GM12878 (cell line): ENCODE measurements at regions of chr11 and their contacts with region 1.

Region 1: DNA sequence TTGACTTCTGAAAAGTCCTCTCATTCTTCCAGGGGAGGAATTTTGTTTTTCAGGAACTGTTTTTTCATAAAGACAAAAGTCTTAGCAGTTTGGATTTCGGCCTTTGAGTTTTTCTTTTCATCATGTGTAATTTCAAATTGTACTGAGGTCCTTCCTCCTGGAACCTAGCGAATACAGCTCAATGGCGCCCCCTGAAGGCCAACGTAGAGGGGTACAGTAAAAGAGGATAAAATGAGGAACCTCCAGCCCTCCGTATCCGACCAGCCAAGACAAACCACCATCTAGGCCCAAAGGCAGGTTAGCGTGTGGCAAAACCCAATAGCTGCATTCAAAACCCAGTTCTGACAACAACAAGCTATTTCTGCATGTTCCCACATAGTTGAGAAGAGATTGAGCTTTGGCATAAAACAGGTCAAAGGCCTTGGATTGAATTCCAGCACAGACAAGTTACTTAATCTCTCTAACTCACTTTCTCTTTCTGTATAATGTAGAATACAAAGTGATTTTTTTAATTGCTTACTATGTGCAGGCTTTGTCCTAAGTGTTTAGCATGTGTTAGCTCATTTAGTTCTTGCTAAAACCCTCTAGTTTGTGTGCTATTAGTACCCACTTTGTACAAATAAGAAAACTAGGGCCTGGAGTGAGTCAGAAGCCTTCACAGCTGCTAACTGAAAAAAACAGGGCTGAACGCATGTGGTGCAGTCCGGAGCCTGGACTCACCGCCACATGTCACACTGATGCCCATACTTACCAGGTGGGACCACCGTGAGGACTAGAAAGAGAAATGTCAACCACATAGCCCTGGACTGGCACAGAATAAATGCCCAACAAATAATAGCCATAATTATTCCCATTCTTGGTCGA is 43.2 kb upstream of the ETS1 start:
- DNase-seq: peak; percentile 89
- ATAC-seq: peak; percentile 87
- H3K4me3 ChIP-seq: peak overlapping the region; percentile 15; the same call in 1 of the 2 replicates
- H3K27ac ChIP-seq: peak overlapping the region; percentile 64
- H3K4me1 ChIP-seq: peaks cover 51% of the 10 kb centered on the region
- H3K27me3 ChIP-seq: no peaks in the 10 kb centered on the region
- CTCF ChIP-seq: peak; percentile 80 to 97 (median 82)
- EP300 ChIP-seq: no peak
- POLR2A ChIP-seq: no peak
- RAD21 ChIP-seq: peak; percentile 98

Region 2: DNA sequence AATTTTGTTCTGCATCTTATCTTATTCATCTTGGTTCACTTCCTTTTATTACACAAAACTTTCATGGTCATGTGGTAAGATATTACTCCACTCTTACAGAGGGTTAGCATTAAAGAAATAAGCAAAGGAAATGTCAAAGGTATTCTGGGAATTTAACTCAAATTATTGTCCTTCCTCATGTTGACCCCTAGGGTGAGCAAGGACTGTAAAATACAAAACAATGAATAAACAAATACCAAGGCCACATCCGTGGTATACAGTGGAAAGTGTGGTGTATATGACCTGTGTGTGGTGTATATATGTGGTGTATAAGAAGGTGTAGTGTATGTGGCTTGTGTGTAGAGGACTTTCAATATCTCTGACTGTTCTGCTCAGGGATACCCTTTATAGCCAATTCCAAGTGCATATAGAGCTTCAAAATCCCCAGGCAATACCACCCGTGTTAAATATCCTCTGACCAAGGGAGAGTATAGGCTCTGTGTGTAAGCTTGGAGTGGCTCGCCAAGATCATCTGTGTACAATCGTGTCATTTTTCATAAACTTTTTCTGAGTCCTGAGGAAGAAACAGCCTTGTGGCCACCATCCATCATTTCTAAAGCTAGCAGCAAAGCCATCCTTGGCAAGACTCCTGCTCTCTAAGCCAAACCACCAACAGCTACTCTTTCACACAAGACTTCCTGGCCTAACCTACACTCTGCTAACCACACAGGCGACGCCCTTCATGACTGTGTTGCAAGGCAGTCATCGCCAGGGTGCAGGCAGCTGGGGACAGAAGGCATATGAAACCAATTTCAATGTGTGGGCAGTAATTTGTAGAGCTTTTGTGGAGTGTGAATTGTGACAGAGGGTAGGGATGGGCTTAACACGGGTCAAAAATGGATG is 591.2 kb before region 1 on chr11:
- CTCF ChIA-PET with region 1: no interaction called
- POLR2A ChIA-PET with region 1: no interaction called
- RAD21 ChIA-PET with region 1: no interaction called
- SMC1A ChIA-PET with region 1: interaction called, 4 read pairs
- in situ Hi-C with region 1: loop called (anchors 10 kb)
- intact Hi-C with region 1: no loop called
- DNase-seq: no peak
- ATAC-seq: peak; percentile 84
- H3K4me3 ChIP-seq: no peak overlapping the region
- H3K27ac ChIP-seq: no peak overlapping the region
- H3K4me1 ChIP-seq: no peaks in the 10 kb centered on the region
- H3K27me3 ChIP-seq: peaks cover 0 to 6% of the 10 kb centered on the region in 2 experiments; a peak in 2 of 4 replicates
- CTCF ChIP-seq: no peak
- EP300 ChIP-seq: no peak
- POLR2A ChIP-seq: no peak
- RAD21 ChIP-seq: no peak

Region 3: GRCh38 chr11:128297091-128297651 is 333.4 kb before region 1 on chr11:
- CTCF ChIA-PET with region 1: interaction called, 195 read pairs
- POLR2A ChIA-PET with region 1: interaction called, 5 read pairs
- RAD21 ChIA-PET with region 1: interaction called, 144 read pairs
- SMC1A ChIA-PET with region 1: interaction called, 200 read pairs
- in situ Hi-C with region 1: loop called (anchors 5 kb)
- intact Hi-C with region 1: no loop called
- DNase-seq: no peak
- ATAC-seq: peak; percentile 22; the same call in 2 of the 3 replicates
- H3K4me3 ChIP-seq: no peak overlapping the region
- H3K27ac ChIP-seq: no peak overlapping the region
- H3K4me1 ChIP-seq: peaks cover 30% of the 10 kb centered on the region
- H3K27me3 ChIP-seq: no peaks in the 10 kb centered on the region
- CTCF ChIP-seq: no peak
- EP300 ChIP-seq: 0 out of 4 replicates have a peak, but pooled peaks of 1 of the 2 experiments have one; percentile 18
- POLR2A ChIP-seq: no peak
- RAD21 ChIP-seq: no peak

Region 4: DNA sequence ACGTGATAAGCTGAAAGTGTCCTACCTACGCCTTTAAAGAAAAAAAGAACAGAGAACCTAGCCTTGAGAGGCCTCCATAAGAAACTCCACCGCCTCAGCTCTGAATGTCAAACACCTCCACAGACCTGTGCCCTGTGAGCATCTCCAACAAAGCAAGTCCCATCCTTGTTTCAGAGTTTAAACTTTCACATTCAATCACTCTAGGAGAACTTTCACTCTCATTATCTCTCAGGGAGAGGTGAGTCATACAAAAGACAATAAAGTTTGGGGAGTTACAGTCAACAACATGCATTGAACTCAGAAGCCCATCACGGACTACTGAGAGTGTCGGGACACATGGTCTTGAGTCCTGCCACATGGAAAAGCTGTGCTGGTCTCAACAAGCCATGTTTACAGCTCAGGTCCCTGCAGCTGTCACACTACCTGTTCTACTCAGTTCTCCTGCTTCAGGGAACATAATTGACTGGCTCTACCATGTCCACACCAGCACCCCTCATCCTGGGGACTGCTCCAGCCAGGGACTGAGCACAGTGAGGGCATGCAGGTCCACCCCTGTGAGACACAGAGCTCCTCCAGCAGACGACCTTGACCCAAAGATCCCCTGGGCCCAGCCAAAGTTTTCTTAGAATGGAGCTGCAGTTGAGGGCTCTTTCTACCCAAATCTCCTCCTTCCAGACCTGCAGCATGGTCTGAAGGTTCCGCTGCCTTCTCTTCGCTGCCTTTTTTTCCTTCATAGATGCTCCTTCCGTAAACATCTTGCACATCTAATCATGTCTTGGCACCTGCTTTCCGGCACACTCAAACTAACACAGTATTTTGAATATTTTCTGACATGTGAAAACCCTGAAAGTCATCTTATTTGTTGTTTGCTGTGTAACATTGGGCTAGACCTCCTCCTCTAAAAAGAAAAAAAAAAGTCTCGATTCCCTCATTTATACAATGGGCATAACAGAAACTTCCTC is 158.2 kb before region 1 on chr11:
- CTCF ChIA-PET with region 1: interaction called, 14 read pairs
- POLR2A ChIA-PET with region 1: no interaction called
- RAD21 ChIA-PET with region 1: interaction called, 30 read pairs
- SMC1A ChIA-PET with region 1: interaction called, 52 read pairs
- in situ Hi-C with region 1: no loop called
- intact Hi-C with region 1: loop called (anchors 1 kb)
- DNase-seq: peak; percentile 93
- ATAC-seq: peak; percentile 78
- H3K4me3 ChIP-seq: peak overlapping the region; percentile 41; the same call in 1 of the 2 replicates
- H3K27ac ChIP-seq: peak overlapping the region; percentile 91
- H3K4me1 ChIP-seq: peaks cover 92% of the 10 kb centered on the region
- H3K27me3 ChIP-seq: no peaks in the 10 kb centered on the region
- CTCF ChIP-seq: no peak
- EP300 ChIP-seq: peak; percentile 76 to 78; a peak in 3 of 4 replicates
- POLR2A ChIP-seq: peak; percentile 75
- RAD21 ChIP-seq: peak; percentile 25; the same call in 1 of the 2 replicates

Region 5: DNA sequence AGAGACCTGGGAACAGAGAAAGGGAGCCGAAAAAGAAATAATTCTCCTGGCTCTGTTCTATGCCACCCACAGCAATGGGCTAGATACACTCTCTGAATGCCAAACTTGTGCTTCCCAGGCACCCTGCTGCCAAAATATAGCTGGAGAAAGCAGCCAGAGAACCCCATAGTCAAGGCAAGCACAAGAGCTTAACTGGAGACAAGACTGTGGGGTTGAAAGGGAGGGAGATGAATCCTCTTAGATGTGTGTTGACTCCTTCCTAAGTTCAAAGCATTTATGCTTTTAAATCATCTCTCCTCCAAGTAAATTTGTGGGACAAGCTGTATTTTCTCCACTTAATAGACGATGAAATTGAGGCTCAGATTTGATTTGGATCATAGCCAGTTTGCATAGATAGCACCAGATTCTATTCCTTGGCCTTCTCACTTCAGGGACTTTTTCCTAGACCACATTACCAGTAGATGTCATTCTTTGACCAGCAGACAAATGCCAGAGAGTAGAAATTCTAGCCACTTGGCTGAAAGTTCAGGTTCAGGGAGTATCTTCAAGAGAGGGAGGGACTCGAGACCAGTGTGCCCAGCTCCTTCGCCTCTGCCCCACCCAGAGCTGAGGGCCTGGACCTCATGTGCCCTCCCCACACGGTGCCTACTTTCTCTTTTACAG is 26.7 kb before region 1 on chr11:
- CTCF ChIA-PET with region 1: interaction called, 444 read pairs
- POLR2A ChIA-PET with region 1: interaction called, 83 read pairs
- RAD21 ChIA-PET with region 1: interaction called, 273 read pairs
- SMC1A ChIA-PET with region 1: interaction called, 596 read pairs
- in situ Hi-C with region 1: no loop called
- intact Hi-C with region 1: loop called (anchors 1 kb)
- DNase-seq: peak; percentile 44
- ATAC-seq: peak; percentile 91
- H3K4me3 ChIP-seq: no peak overlapping the region
- H3K27ac ChIP-seq: no peak overlapping the region
- H3K4me1 ChIP-seq: peaks cover 6% of the 10 kb centered on the region
- H3K27me3 ChIP-seq: no peaks in the 10 kb centered on the region
- CTCF ChIP-seq: peak; percentile 5 to 68 (median 38); a peak in 5 of 6 replicates
- EP300 ChIP-seq: no peak
- POLR2A ChIP-seq: no peak
- RAD21 ChIP-seq: peak; percentile 87

Region 6: DNA sequence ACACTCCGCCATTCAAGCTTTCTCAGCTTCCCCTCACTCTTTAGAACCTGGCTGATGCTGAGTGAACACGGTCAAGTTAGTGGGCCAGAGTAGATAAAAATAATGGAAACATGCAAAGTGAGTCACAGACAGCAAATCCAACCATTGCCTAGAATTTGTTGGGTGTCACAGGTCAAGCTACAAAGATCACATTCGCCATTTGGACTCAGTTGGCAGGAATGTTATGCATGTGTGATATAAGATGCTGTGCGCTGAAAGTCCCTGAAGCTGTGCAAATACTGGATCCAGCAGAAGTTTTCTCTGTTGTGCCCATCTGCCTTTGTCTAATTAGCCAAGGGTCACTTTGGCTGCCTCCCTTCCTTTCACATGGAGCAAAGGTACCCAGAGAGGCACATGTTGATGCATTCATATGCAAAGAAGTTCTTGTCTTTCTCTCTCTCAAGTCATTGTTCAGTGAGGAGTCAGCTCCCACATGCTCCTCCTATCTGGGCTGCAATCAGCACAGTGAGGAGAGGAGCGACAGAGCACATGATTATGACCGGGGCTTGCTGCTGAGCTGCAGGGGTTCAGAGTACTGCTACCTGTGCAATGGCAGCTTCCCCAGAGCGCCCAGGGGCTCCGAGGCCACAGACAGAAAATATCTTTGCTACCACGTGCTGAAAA is 103.0 kb after region 1 on chr11:
- CTCF ChIA-PET with region 1: interaction called, 30 read pairs
- POLR2A ChIA-PET with region 1: no interaction called
- RAD21 ChIA-PET with region 1: interaction called, 30 read pairs
- SMC1A ChIA-PET with region 1: interaction called, 23 read pairs
- in situ Hi-C with region 1: no loop called
- intact Hi-C with region 1: no loop called
- DNase-seq: no peak
- ATAC-seq: peak; percentile 55
- H3K4me3 ChIP-seq: peak overlapping the region; percentile 24; the same call in 1 of the 2 replicates
- H3K27ac ChIP-seq: peak overlapping the region; percentile 91
- H3K4me1 ChIP-seq: peaks cover 89% of the 10 kb centered on the region
- H3K27me3 ChIP-seq: no peaks in the 10 kb centered on the region
- CTCF ChIP-seq: no peak
- EP300 ChIP-seq: no peak
- POLR2A ChIP-seq: 0 out of 2 replicates have a peak, but pooled peaks have one; percentile 31
- RAD21 ChIP-seq: no peak

Region 7: DNA sequence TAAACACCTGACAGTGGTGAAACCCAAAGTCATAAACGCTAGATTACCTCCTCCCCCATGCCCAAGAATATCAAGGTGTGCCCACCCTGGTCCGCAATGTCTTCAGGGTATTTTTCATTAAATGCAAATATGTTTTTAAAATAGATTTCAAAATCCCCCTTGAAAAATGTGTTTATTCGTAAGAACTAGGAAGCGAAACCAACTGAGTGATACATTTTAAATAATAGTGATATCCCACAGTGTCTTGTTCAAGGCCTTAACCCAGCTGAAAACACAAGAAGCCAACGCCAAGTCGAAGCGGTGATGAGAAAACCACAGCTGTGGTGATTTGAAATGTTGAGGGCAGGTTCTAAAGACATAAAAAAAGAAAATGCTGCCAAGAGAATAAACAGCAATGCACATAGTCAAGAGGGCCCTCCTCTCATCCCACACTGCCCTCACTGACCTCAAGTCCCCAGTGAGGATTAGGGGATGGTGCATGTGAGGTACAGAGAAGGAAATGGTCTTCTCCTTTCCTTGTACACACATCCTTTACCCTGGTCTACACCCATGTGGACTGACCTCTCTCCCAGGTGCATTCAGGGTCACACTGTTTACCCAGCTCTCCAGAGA is 211.0 kb after region 1 on chr11:
- CTCF ChIA-PET with region 1: interaction called, 80 read pairs
- POLR2A ChIA-PET with region 1: interaction called, 3 read pairs
- RAD21 ChIA-PET with region 1: interaction called, 4 read pairs
- SMC1A ChIA-PET with region 1: interaction called, 12 read pairs
- in situ Hi-C with region 1: loop called (anchors 25 kb)
- intact Hi-C with region 1: loop called (anchors 5 kb)
- DNase-seq: peak; percentile 64
- ATAC-seq: peak; percentile 88
- H3K4me3 ChIP-seq: no peak overlapping the region
- H3K27ac ChIP-seq: peak overlapping the region; percentile 57
- H3K4me1 ChIP-seq: peaks cover 29% of the 10 kb centered on the region
- H3K27me3 ChIP-seq: no peaks in the 10 kb centered on the region
- CTCF ChIP-seq: no peak
- EP300 ChIP-seq: no peak; a peak in 1 of 4 replicates
- POLR2A ChIP-seq: no peak
- RAD21 ChIP-seq: no peak